ENCODE measurements at regions of chr9 and their contacts with region 1.

Region 1: DNA sequence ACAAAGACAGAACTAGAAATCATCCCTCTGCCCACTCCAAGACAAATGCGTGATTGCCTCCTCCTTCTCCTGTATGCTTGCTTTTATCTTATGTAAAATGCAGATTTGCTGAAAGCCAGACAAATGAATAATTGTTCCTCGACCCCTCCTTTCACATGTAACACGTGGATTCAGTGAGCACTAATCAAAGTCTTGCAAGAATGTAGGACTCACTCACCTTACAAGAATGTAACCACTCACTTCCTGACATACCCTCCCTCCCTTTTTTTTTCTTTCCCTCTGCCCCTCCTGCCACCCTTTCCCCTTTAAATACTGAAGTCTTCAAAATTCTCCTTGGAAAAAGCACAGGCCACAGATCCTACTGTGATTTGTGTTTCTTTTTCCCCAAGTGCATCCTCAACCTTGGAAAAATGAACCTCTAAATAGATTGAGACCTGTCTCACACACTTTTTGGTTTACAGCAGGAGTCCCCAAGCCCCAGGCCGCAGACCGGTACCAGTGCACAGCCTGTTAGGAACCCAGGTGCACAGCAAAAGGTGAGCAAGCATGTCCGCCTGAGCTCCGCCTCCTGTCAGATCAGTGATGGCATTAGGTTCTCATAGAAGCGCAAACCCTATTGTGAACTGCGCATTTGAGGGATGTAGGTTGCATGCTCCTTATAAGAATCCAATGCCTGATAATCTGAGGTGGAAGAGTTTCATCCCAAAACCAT is 29.4 kb upstream of the HSD17B3 start:
- DNase-seq: no peak
- ATAC-seq: no peak
- H3K4me3 ChIP-seq: no peak overlapping the region
- H3K27ac ChIP-seq: no peak overlapping the region
- H3K4me1 ChIP-seq: no peaks in the 10 kb centered on the region
- H3K27me3 ChIP-seq: no peaks in the 10 kb centered on the region
- CTCF ChIP-seq: no peak

Region 2: GRCh38 chr9:96217754-96218693 is 113.4 kb before region 1 on chr9:
- intact Hi-C with region 1: no loop called
- DNase-seq: peak; percentile 53 to 96 (median 82)
- ATAC-seq: peak; percentile 96 to 98 (median 96)
- H3K4me3 ChIP-seq: peak overlapping the region in 3 of 4 donors; percentile 7 to 41 (median 31)
- H3K27ac ChIP-seq: peak overlapping the region; percentile 10 to 50 (median 25)
- H3K4me1 ChIP-seq: peaks cover 4 to 11% (median 6%) of the 10 kb centered on the region in 3 donors
- H3K27me3 ChIP-seq: no peaks in the 10 kb centered on the region
- CTCF ChIP-seq: peak; percentile 96 to 99 (median 99)

Region 3: DNA sequence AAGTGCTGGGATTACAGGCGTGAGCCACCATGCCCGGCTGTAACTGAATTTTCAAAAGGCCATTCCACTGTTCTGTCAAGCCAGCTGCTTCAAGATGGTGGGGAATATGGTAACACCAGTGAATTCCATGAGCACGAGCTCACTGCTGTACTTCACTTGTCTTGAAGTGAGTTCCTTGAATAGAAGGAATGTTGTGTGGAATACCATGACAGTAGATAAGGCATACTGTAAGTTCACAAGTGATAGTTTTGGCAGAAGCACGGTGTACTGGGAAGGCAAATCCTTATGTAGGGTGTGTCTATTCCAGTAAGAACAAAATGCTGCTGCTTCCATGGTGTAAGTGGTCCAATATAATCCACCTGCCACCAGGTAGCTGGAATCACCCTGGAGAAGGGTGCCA is 330.3 kb after region 1 on chr9:
- intact Hi-C with region 1: loop called in 1 of 3 experiments (anchors 10 kb)
- DNase-seq: no peak
- ATAC-seq: no peak
- H3K4me3 ChIP-seq: no peak overlapping the region
- H3K27ac ChIP-seq: no peak overlapping the region
- H3K4me1 ChIP-seq: no peaks in the 10 kb centered on the region
- H3K27me3 ChIP-seq: no peaks in the 10 kb centered on the region
- CTCF ChIP-seq: no peak

Measured in pancreas (tissue), 10 donors.